Right ventricle myocardium inferior (tissue), 1 donor: ENCODE measurements at regions of chr1 and their contacts with region 1.

Region 1: GRCh38 chr1:109426278-109427170 is at the start of gene PSMA5:
- DNase-seq: peak; percentile 97
- ATAC-seq: peak; percentile 100
- total RNA-seq, gene PSMA5: 62.4 TPM

Region 2: DNA sequence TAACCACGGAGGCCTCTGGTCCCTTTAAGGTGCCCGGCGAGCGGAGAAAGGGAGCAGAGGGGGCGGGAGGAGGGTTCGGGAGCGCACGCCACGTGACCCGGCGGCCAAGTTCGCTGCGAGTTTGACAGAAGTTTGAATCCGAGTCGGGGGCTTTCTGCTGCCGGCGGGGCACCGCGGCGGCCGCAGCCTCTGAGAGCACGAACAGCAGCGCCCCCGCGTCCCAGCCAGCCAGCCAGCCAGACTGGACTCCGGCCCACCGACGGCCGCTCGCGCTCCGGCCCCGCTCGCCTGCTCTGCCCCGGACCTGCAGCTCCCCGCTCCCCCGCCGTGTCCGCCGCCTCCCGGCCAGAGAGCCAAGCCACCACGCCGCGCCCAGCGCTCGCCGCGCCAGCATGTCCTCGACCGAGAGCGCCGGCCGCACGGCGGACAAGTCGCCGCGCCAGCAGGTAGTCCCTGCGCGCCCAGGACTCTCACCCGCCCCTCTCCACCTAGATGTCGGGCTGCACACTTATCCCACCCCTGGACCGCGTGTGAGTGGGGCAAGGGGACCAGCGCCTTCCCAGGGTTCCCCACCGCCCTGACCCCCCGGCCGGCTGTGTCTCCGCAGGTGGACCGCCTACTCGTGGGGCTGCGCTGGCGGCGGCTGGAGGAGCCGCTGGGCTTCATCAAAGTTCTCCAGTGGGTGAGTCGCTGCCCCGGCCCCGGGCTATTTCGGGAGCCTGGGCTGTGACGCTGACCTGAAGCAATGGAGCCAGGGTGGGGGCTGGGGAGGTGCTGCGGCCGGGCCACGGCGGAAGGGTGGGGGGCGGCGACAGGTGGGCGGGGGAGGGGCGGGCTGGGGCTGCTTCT is 40.2 kb after region 1 on chr1 and contains the start of gene SYPL2:
- intact Hi-C with region 1: loop called (anchors 1 kb)
- DNase-seq: peak; percentile 79
- ATAC-seq: peak; percentile 88
- total RNA-seq, gene SYPL2: 33.0 TPM

Region 3: GRCh38 chr1:109483672-109484518 is 57.4 kb after region 1 on chr1 and contains the start of gene ATXN7L2:
- intact Hi-C with region 1: loop called (anchors 5 kb)
- DNase-seq: peak; percentile 95
- ATAC-seq: peak; percentile 91
- total RNA-seq, gene ATXN7L2: 2.5 TPM